ENCODE measurements at regions of chr3 and their contacts with region 1.

Region 1: DNA sequence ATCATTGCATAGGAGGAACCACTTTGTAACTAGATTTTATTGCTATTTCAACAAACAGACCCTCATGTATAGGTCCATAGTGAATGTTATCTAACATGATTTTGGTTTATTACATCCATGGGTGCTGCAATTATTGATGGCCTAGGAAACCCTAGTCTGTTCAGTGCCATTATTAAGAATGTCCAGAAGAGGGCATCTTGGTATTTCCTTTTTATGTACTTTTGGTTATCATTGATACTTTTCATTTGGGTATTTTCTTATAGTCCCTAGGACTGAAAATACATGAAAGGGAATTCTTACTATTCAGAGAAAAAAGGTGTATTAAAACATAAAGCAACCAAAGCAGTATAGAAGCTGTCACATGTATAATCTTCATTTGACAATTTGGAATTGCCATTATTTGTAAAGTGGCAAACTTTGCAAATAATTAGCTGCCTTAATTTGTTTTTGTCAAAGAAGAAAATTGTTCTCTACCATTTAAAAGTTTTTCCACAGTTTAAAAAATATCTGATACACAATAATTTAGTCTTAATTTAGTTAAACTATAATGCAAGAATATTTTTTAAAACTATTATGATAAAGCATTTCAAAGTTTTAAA is 48.7 kb downstream of the CNOT10 start:
- DNase-seq: no peak
- ATAC-seq: no peak
- H3K4me3 Mint-ChIP-seq: no peak overlapping the region
- H3K27ac Mint-ChIP-seq: no peak overlapping the region
- H3K4me1 Mint-ChIP-seq: no peaks in the 10 kb centered on the region
- H3K27me3 Mint-ChIP-seq: no peaks in the 10 kb centered on the region

Region 2: DNA sequence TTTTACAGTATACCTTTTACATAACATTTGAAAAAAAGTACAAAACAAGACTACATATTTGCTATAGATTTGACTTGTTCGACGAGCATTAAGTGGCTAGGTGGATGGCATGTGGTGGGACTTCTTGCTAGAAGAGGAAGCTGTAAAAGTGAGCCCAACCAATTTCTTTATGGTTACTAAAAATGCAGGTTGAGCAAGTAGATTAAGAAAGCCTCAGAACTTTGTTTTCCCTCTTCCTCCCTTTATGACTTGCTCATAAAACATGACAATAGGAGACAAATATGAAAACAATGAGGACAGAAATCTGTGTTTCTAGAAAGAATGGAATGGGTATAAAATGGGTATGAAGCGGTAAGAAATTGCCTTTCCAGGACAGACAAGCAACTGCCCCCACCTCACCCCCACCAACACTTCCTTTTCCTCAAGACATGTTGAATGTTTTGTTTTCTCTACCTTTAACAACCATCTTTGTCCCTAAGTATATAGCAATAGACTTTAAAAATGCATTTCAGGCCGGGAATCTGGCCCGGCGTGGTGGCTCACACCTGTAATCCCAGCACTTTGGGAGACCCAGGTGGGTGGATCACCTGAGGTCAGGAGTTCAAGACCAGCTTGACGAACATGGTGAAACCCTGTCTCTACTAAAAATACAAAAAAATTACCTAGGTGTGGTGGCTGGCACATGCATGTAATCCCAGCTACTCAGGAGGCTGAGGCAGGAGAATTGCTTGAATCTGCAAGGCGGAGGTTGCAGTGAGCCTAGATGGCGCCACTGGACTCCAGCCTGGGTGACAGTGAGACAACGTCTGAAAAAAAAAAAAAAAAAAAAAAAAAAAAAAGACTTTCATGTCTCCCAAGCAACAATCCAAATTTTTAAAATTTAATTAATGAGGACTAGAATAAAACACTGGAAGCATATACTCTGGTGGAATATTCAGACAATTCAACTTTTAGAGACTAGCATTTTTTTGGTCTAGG is 168.0 kb after region 1 on chr3:
- CTCF ChIA-PET with region 1: interaction called, 3 read pairs
- POLR2A ChIA-PET with region 1: no interaction called
- intact Hi-C with region 1: loop called (anchors 1 to 10 kb)
- DNase-seq: peak; percentile 71
- ATAC-seq: no peak
- H3K4me3 Mint-ChIP-seq: no peak overlapping the region
- H3K27ac Mint-ChIP-seq: no peak overlapping the region
- H3K4me1 Mint-ChIP-seq: no peaks in the 10 kb centered on the region
- H3K27me3 Mint-ChIP-seq: peaks cover 5% of the 10 kb centered on the region

Region 3: GRCh38 chr3:32934150-32934742 is 200.5 kb after region 1 on chr3:
- CTCF ChIA-PET with region 1: interaction called, 3 read pairs
- POLR2A ChIA-PET with region 1: no interaction called
- intact Hi-C with region 1: loop called (anchors 1 kb)
- DNase-seq: peak; percentile 48
- ATAC-seq: no peak
- H3K4me3 Mint-ChIP-seq: no peak overlapping the region
- H3K27ac Mint-ChIP-seq: no peak overlapping the region
- H3K4me1 Mint-ChIP-seq: no peaks in the 10 kb centered on the region
- H3K27me3 Mint-ChIP-seq: no peaks in the 10 kb centered on the region

Measured in activated CD4-positive, alpha-beta T cell treated with anti-CD3 and anti-CD28 coated beads for 36 hours (primary cell).